Aorta (tissue), 5 donors: ENCODE measurements at regions of chr12 and their contacts with region 1.

Region 1: GRCh38 chr12:112108201-112109079 is at the start of gene NAA25:
- DNase-seq: peak; percentile 95 to 97
- ATAC-seq: peak; percentile 96
- H3K4me3 ChIP-seq: peak within 1 kb of the TSS; percentile 46 to 64
- H3K27ac ChIP-seq: peak within 1 kb of the TSS in 1 of 2 donors; percentile 96
- H3K4me1 ChIP-seq: no peaks in the 10 kb centered on the region
- H3K27me3 ChIP-seq: no peaks in the 10 kb centered on the region
- total RNA-seq, gene NAA25: 23.4 to 27.5 TPM

Region 2: DNA sequence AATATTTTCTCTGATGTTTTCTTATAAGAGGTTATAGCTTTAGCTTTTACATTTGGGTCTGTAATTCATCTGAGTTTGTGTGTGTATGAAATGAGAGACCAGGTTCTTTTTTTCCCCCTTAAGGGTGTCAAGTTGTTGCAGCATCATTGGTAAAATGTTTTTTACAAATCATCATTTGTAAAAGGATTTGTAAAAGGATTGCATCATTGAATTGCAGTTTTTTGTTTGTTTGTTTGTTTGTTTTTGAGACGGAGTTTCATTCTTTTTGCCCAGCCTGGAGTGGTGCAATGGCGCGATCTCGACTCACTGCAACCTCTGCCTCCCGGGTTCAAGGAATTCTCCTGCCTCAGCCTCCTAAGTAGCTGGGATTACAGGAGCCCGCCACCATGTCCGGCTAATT is 235.3 kb before region 1 on chr12:
- intact Hi-C with region 1: no loop called
- DNase-seq: no peak
- ATAC-seq: no peak
- H3K4me3 ChIP-seq: no peak overlapping the region
- H3K27ac ChIP-seq: no peak overlapping the region
- H3K4me1 ChIP-seq: no peaks in the 10 kb centered on the region
- H3K27me3 ChIP-seq: no peaks in the 10 kb centered on the region

Region 3: GRCh38 chr12:112012775-112013600 is 95.5 kb before region 1 on chr12 and contains the starts of genes ERP29 and TMEM116:
- intact Hi-C with region 1: loop called in 1 of 2 experiments (anchors 10 kb)
- DNase-seq: peak; percentile 99 to 100
- ATAC-seq: peak; percentile 98
- H3K4me3 ChIP-seq: peak within 1 kb of the TSS; percentile 57 to 88
- H3K27ac ChIP-seq: peak within 1 kb of the TSS; percentile 31 to 82
- H3K4me1 ChIP-seq: no peaks in the 10 kb centered on the region
- H3K27me3 ChIP-seq: no peaks in the 10 kb centered on the region
- total RNA-seq, gene ERP29: 41.5 to 62.2 TPM
- total RNA-seq, gene TMEM116: 8.5 to 9.9 TPM

Region 4: GRCh38 chr12:112161711-112162110 is 53.3 kb after region 1 on chr12:
- intact Hi-C with region 1: no loop called
- DNase-seq: peak; percentile 24 to 38
- ATAC-seq: no peak
- H3K4me3 ChIP-seq: no peak overlapping the region
- H3K27ac ChIP-seq: no peak overlapping the region
- H3K4me1 ChIP-seq: no peaks in the 10 kb centered on the region
- H3K27me3 ChIP-seq: no peaks in the 10 kb centered on the region

Region 5: GRCh38 chr12:112198120-112198733 is 89.8 kb after region 1 on chr12:
- intact Hi-C with region 1: no loop called
- DNase-seq: no peak
- ATAC-seq: no peak
- H3K4me3 ChIP-seq: no peak overlapping the region
- H3K27ac ChIP-seq: no peak overlapping the region
- H3K4me1 ChIP-seq: no peaks in the 10 kb centered on the region
- H3K27me3 ChIP-seq: no peaks in the 10 kb centered on the region

Region 6: DNA sequence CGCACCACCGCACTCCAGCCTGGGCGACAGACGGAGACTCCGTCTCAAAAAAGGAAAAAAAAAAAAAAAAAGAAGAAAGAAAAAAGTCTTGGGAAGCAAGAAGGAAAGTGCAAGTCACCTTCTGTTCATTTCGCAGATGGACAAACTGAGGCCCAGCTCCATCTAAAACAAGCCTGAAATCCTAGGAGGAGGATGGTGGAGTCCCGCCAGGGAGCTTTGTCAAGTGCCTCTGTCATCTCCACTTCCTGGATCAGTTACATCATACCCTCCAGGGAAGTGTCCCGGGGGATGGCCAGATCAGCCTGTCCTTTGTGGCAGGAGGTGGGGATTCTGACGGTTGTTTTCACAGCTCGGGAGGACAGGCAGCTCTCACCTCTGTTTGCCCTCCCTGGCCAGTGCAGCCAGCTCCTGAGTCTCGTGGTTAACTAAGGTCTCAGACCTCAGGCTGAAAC is 1305.1 kb after region 1 on chr12:
- intact Hi-C with region 1: no loop called
- DNase-seq: no peak
- ATAC-seq: no peak
- H3K4me3 ChIP-seq: no peak overlapping the region
- H3K27ac ChIP-seq: no peak overlapping the region
- H3K4me1 ChIP-seq: no peaks in the 10 kb centered on the region
- H3K27me3 ChIP-seq: no peaks in the 10 kb centered on the region